Ascending aorta (tissue), 2 donors: ENCODE measurements at regions of chr16 and their contacts with region 1.

Region 1: GRCh38 chr16:31142109-31143010 is 6.8 kb upstream of the PRSS8 start:
- DNase-seq: peak; percentile 97 to 99
- H3K4me3 ChIP-seq: peak overlapping the region; percentile 59 to 73
- H3K27ac ChIP-seq: peak overlapping the region; percentile 80 to 83
- H3K4me1 ChIP-seq: peaks cover 6 to 24% of the 10 kb centered on the region in 2 donors
- H3K27me3 ChIP-seq: no peaks in the 10 kb centered on the region
- CTCF ChIP-seq: peak; percentile 93 to 99 (median 96)

Region 2: DNA sequence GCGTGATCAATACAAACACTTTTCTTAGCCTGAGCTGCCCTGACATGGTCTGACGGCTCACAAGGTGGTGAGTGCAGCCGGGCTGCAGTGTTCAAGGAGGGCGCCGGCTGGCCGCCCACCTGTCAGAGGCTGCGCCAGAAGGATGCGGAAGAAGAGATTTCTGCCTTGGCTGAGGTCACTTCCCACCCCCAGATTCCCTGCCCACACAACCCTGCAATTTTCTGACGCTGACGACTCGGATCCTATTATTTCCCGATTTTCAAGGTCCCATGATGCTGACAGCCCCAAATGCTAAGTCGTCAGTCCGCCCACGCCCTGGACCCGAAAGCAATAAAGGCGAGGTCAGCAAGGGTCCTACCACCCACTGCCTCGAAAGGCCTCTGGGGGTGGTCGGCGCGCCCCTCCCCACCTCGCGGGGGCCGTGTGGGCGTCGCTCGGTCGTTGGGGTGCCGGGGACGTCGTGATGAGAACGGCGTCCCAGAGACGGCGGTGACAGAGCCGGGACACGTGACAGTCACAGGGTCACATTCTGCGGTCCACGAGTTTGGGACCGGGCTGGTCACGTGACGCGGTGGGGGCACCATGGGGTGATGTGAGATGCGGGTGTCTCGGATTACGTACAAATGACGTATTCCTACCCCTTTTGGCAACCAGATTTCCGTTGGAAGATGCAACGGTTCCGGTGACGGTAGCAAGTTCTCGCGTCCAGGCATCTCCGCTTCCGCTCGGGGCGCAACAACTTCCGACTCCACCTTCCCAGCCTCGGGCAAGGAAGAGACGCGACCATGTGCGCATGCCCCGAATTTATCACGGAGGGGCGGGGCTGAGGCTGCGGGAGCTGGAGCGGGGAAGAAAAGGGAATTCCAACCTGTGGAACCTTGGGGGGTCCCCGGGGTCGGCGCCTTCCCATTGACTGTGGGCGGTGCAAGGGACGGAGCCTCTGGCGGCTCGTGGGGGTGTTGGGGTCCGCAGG is 109.3 kb before region 1 on chr16 and contains the start of gene STX4:
- intact Hi-C with region 1: loop called (anchors 1 kb)
- DNase-seq: peak; percentile 88 to 99
- H3K4me3 ChIP-seq: peak within 1 kb of the TSS; percentile 83 to 99
- H3K27ac ChIP-seq: peak within 1 kb of the TSS; percentile 92 to 99
- H3K4me1 ChIP-seq: peaks cover 3 to 10% of the 10 kb centered on the region in 2 donors
- H3K27me3 ChIP-seq: no peaks in the 10 kb centered on the region
- CTCF ChIP-seq: no peak
- total RNA-seq, gene STX4: 79.1 TPM

Region 3: DNA sequence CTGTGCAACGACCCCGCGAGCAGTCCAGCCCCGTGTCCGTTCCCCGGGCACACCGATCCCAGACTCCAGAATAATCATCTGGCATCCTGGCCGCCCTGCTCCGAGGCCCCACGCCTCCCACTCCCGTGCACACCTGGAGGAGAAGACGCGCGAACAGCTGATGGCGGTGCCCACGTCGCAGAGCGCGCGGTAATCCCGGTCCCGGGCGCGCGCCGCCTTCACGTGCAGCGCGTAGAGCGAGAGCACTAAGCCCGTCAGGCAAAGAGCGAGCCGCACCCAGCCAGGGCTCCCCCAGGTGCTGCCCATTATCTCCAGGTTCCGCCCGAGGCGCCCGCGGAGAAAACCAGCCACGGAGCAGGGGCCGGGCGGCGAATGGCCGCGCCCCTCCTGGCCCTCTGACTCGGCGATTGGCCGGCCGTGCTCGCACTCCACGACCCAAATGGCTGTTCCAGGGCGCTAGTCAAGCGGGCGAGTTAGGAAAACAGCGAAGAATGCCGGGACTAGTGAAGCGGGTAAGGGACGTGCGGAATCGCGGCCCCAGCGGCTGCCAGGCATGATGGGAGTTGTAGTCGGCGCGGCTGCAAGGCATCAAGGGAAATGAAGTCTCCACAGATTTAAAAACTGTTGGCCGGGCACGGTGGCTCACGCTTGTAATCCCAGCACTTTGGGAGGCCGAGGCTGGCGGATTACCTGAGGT is 47.8 kb before region 1 on chr16 and contains the start of gene VKORC1:
- intact Hi-C with region 1: loop called (anchors 1 kb)
- DNase-seq: peak; percentile 88 to 98
- H3K4me3 ChIP-seq: peak within 1 kb of the TSS; percentile 94 to 97
- H3K27ac ChIP-seq: peak within 1 kb of the TSS; percentile 86 to 92
- H3K4me1 ChIP-seq: peaks cover 0 to 3% of the 10 kb centered on the region in 2 donors
- H3K27me3 ChIP-seq: no peaks in the 10 kb centered on the region
- CTCF ChIP-seq: no peak
- total RNA-seq, gene VKORC1: 227 TPM

Region 4: DNA sequence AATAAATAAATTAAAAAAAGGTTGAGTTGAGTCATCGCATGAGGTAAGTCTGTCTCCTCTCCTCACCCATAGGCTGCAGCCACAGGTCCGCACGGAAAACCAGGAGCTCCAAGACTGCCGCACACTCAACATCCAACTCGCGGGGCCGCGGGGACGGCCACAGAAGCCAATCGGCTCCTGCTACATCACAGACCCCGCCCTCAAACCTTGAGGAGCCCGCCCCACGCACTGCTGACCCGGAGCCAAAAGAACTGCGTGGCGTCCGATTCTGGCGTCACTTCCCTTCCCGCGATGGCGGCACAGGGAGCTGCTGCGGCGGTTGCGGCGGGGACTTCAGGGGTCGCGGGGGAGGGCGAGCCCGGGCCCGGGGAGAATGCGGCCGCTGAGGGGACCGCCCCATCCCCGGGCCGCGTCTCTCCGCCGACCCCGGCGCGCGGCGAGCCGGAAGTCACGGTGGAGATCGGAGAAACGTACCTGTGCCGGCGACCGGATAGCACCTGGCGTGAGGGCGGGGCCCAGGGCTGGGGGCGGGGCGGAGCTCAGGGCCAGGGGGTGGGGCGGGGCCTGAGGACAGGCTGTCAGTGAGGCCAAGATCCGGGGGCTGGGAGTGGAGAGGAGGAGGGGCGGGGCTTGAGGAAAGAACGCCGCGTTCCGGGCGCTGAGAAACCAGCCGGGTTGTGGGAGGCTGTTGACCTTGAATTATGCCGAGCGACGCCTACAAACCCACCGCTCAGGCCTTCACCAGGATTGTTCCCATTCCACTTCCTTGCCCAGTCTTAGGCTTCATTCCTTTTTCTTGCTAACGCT is 24.8 kb before region 1 on chr16 and contains the start of gene KAT8:
- intact Hi-C with region 1: loop called (anchors 1 kb)
- DNase-seq: peak; percentile 97 to 99
- H3K4me3 ChIP-seq: peak within 1 kb of the TSS; percentile 81 to 88
- H3K27ac ChIP-seq: peak within 1 kb of the TSS; percentile 97
- H3K4me1 ChIP-seq: peaks cover 0 to 13% of the 10 kb centered on the region in 2 donors
- H3K27me3 ChIP-seq: no peaks in the 10 kb centered on the region
- CTCF ChIP-seq: no peak
- total RNA-seq, gene KAT8: 113 TPM

Region 5: DNA sequence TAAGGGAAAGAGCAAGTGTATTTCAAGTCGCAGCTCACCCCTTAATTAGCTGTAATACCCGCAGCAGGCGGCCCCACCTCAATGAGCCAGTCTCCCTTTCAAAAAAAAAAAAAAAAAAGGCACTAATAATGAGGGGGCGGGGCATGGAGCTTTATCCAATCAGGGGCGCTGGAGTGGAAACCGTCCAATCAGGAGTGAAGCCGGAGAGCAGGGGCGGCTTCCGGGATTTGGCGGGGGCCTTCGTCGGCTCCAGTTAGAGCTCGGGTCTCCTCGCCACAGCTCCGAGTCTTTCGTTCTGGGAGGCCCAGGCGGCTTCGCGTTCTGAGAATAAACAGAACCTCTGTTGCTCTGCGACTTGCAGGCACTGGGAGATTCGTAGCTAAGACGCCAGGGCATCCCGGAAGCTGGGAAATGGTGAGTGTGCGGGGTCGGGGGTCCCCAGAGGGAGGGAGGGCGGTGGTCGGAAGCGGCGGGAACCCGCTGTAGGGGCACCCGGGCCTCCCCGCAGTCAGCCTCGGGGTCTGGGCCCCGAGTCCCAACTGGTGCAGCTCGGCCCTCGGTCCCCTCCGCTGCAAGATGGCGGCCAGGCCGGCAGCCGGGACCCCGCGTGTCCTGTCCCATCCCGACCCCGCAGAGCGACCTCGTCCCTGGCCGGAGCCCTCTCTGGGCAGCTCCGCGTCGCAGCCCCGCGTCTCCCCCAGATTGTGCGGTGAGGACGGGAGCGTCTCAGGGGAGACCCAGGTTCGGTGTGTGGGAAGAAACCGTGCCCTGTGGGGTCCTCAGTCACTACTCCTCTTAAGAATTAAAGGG is 731.4 kb after region 1 on chr16 and contains the start of gene ZNF267:
- intact Hi-C with region 1: loop called (anchors 5 kb)
- DNase-seq: peak; percentile 82 to 98
- H3K4me3 ChIP-seq: peak within 1 kb of the TSS; percentile 75 to 87
- H3K27ac ChIP-seq: peak within 1 kb of the TSS; percentile 88 to 92
- H3K4me1 ChIP-seq: peaks cover 3 to 14% of the 10 kb centered on the region in 2 donors
- H3K27me3 ChIP-seq: no peaks in the 10 kb centered on the region
- CTCF ChIP-seq: no peak
- total RNA-seq, gene ZNF267: 3.8 TPM